ENCODE measurements at regions of chr5 and their contacts with region 1.

Region 1: DNA sequence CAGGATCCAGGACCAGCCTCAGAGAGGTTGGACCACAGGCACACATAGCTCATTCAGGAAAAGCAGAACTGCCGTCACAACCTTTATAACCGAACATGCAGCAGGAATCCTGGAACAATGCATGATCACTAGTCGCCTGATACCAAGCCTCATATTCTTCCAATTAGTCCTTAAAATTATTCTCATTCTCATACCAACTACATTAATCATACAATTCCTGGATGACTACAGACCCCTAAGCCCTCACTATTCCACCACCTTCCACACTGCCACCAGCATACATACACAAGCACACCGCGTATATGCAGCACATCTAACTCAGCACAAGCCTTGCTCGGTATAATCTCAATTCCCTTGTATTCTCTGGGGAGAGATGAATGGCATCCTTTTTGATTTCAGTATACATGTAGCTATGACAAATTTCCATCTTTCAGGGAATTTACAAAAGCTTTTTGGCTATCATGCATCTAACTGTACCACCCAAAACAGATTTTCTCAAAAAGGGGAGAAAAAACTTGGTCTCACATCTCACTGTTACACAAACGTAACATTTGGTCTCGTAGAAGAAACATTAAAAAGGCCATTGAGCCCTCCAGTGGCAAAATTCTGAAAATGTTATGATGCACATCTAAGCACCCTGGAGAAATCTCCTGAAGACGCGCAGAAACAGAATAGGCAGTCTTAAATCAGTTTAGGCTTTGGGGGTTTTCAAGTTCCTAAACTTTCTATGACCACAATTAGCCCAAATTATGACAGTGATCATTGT is 46.2 kb downstream of the MCTP1 start:
- DNase-seq: no peak
- H3K4me3 ChIP-seq: no peak overlapping the region
- H3K27ac ChIP-seq: no peak overlapping the region
- H3K4me1 ChIP-seq: no peaks in the 10 kb centered on the region
- H3K27me3 ChIP-seq: no peaks in the 10 kb centered on the region
- CTCF ChIP-seq: peak; percentile 40

Region 2: GRCh38 chr5:94968507-94969095 is 270.1 kb before region 1 on chr5:
- intact Hi-C with region 1: loop called (anchors 5 kb)
- DNase-seq: no peak
- H3K4me3 ChIP-seq: no peak overlapping the region
- H3K27ac ChIP-seq: no peak overlapping the region
- H3K4me1 ChIP-seq: no peaks in the 10 kb centered on the region
- H3K27me3 ChIP-seq: no peaks in the 10 kb centered on the region
- CTCF ChIP-seq: peak; percentile 78

Measured in left ventricle myocardium inferior (tissue), 1 donor.